Pancreas (tissue), 10 donors: ENCODE measurements at regions of chr14 and their contacts with region 1.

Region 1: GRCh38 chr14:77862154-77862786 is 62.4 kb downstream of the ADCK1 start:
- DNase-seq: peak; percentile 43 to 96 (median 78)
- ATAC-seq: peak; percentile 66 to 90 (median 82)
- H3K4me3 ChIP-seq: no peak overlapping the region
- H3K27ac ChIP-seq: no peak overlapping the region
- H3K4me1 ChIP-seq: no peaks in the 10 kb centered on the region
- H3K27me3 ChIP-seq: no peaks in the 10 kb centered on the region
- CTCF ChIP-seq: peak; percentile 89 to 96 (median 90)

Region 2: DNA sequence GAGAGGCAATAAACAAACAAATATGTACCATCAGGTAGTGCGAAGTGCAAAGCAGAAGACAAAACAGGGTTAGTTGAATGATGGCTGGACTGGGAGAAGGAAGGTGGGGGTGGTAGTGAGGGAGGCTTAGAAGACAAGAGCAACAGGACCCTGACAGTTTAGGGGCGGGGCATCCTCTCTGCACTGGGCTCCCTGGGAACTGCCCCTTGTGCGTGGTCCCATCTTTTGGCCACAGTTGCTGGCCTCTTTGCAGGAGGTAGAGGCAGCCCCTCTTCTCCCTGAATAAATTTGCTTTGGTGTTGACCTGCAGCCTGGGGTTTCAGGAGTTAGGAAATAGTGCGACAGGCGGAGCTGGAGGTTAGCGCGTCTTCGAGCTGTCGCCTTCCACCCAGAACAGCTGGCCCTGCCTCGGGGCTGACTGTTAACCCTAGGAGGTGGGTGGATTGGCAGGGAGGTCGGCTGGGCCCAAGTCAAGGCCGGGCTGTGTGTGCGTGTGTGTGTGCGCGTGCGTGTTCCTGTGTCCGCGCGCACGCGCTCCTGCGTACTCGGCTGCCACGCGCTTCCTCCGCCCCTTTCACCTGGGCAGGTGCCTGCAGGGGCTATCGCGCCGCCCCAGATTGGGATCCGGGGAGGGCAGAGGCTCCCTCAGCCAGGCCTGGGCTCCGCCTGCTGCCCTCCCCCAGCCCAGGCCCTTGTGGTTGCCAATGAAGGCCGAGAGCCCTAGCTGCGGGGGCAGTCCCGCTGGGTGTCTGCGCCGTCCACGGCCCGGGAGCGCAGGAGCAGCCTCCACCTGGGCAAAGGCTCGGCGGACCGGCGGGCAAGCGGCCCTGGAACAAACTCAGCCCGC is 118.4 kb after region 1 on chr14:
- intact Hi-C with region 1: loop called in 1 of 3 experiments (anchors 10 kb)
- DNase-seq: peak; percentile 84 to 94 (median 86)
- ATAC-seq: peak; percentile 94 to 97 (median 96)
- H3K4me3 ChIP-seq: peak overlapping the region; percentile 5 to 47 (median 26)
- H3K27ac ChIP-seq: peak overlapping the region in 3 of 4 donors; percentile 3 to 60 (median 46)
- H3K4me1 ChIP-seq: no peaks in the 10 kb centered on the region
- H3K27me3 ChIP-seq: no peaks in the 10 kb centered on the region
- CTCF ChIP-seq: no peak

Region 3: DNA sequence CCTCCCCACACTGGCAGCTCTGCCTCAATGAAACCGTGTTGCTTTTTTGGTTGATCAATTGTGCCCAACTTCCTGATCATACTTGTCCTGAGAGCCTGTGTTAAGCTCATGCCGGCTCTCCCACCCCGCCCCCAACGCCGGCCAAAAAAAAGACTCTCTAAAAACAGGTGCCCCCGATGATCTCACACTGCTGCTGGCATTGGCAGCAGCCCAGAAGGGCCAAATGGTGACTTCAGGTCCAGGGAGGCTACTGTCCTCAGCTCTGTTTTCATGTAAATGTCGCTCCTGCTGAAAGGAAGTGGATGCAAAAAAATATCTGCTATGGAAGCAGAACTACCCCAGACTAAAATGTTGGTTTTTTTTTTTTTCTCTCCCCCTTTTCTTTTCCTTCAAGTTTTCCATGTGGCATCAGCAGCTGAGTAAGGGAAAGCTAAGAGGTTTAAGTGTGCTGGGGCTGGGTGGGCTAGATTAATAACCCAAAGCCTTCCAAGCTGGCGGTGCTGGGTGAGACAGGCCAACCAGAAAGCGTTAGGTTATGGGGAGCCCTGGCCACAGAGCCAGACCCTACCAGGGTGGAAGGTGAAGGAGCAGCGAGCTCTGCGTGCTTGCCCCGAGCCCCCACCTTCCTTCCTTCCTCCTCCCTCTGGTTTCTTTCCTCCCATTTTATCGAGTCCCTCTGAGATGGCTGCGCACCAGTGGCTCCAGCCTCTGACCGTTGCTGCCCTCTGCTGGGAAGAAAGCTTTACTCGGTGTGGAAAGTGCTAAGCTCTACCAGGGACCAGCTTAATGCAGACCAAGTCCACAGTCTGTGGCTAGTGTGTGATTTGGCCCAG is 704.0 kb after region 1 on chr14:
- intact Hi-C with region 1: loop called in 2 of 3 experiments (anchors 5 to 10 kb)
- DNase-seq: peak; percentile 57 to 86 (median 76)
- ATAC-seq: peak; percentile 73 to 99 (median 99)
- H3K4me3 ChIP-seq: peak overlapping the region in 1 of 4 donors; percentile 26
- H3K27ac ChIP-seq: no peak overlapping the region
- H3K4me1 ChIP-seq: no peaks in the 10 kb centered on the region
- H3K27me3 ChIP-seq: no peaks in the 10 kb centered on the region
- CTCF ChIP-seq: peak; percentile 56 to 67 (median 62)

Region 4: GRCh38 chr14:78576437-78577166 is 714.3 kb after region 1 on chr14:
- intact Hi-C with region 1: loop called in 1 of 3 experiments (anchors 10 kb)
- DNase-seq: no peak
- ATAC-seq: no peak
- H3K4me3 ChIP-seq: no peak overlapping the region
- H3K27ac ChIP-seq: no peak overlapping the region
- H3K4me1 ChIP-seq: no peaks in the 10 kb centered on the region
- H3K27me3 ChIP-seq: peaks cover 0 to 2% (median 0%) of the 10 kb centered on the region in 4 donors
- CTCF ChIP-seq: no peak